Activated T-helper 1 cell treated with anti-CD3 and anti-CD28 coated beads, Interleukin-12 subunit alpha, Interleukin-12 subunit beta, Interleukin-2, Interleukin-4 antibody, amounts not matched to agents 30 ng/mL and 10 ng/mL and 1 ng/mL, durations not matched to agents 14 hours and 24 hours and 36 hours (primary cell): ENCODE measurements at regions of chr17 and their contacts with region 1.

Region 1: GRCh38 chr17:76997981-76998531 is 129.9 kb downstream of the MGAT5B start:
- DNase-seq: peak; percentile 73
- H3K4me3 Mint-ChIP-seq: peak overlapping the region; percentile 57
- H3K27ac Mint-ChIP-seq: peak overlapping the region; percentile 96
- H3K4me1 Mint-ChIP-seq: peaks cover 47% of the 10 kb centered on the region
- H3K27me3 Mint-ChIP-seq: no peaks in the 10 kb centered on the region

Region 2: GRCh38 chr17:76917829-76918228 is 80.2 kb before region 1 on chr17:
- intact Hi-C with region 1: no loop called
- DNase-seq: no peak
- H3K4me3 Mint-ChIP-seq: no peak overlapping the region
- H3K27ac Mint-ChIP-seq: no peak overlapping the region
- H3K4me1 Mint-ChIP-seq: no peaks in the 10 kb centered on the region
- H3K27me3 Mint-ChIP-seq: peaks cover 4% of the 10 kb centered on the region

Region 3: GRCh38 chr17:76968707-76969597 is 29.1 kb before region 1 on chr17:
- intact Hi-C with region 1: loop called (anchors 1 kb)
- DNase-seq: peak; percentile 54
- H3K4me3 Mint-ChIP-seq: peak overlapping the region; percentile 71
- H3K27ac Mint-ChIP-seq: no peak overlapping the region
- H3K4me1 Mint-ChIP-seq: peaks cover 27% of the 10 kb centered on the region
- H3K27me3 Mint-ChIP-seq: peaks cover 29% of the 10 kb centered on the region

Region 4: DNA sequence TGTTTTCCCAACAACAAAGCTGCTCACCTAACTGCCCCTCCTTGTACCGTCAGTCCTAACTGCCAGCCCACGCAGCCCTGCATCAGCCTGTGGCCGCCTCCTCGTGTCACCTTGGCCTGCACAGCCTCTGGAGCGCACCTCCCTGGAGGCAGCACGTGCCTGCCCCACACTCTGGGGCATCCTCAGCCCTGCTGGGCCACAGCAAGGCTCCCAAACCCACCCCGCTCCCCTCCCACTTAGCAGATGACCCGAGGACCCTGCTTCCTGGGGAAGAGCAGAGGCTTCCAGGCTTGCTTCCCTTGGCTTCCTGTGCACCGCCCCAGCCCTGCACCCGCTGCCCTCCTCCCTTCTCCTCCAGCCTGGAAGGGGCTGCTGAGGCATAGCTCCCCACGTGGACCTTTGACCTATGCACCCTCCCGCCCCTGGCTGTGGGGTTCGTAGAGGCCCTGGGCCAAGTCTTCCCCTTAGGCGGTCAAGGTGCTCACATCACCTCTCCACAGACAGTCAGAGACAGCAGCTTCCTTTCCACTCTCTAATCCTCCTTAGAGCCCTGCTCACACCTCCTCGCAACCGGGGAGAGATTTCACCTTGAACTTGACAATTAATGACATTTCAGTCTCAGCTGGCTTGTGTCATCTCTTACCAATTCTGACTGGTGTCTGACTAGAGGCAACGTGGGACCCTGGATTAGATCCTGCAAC is 14.8 kb before region 1 on chr17:
- intact Hi-C with region 1: loop called (anchors 2 kb)
- DNase-seq: no peak
- H3K4me3 Mint-ChIP-seq: peak overlapping the region; percentile 29
- H3K27ac Mint-ChIP-seq: peak overlapping the region; percentile 84
- H3K4me1 Mint-ChIP-seq: peaks cover 35% of the 10 kb centered on the region
- H3K27me3 Mint-ChIP-seq: no peaks in the 10 kb centered on the region